Ovary (tissue), 10 donors: ENCODE measurements at regions of chr7 and their contacts with region 1.

Region 1: DNA sequence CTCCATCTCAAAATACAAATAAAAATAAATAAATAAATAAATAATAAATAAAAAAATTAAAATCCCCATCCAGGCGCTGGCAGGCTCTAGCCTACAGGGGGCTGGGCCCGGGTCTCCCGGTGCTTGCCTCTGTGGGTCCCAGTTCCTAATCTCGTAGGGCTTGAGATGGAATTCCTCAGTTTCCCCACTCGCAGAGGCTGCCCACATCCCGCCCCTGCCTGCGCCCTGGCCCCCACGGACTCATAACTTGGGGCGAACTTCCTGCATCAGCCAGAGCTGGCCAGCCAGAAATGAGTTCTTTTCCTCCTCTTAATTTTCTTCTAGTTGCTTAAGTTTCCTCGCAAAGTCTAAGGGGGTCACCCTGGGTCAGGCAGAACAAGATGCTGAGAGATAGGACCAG is 22.0 kb upstream of the SRRM3 start:
- DNase-seq: no peak
- H3K4me3 ChIP-seq: no peak overlapping the region
- H3K27ac ChIP-seq: no peak overlapping the region
- H3K4me1 ChIP-seq: no peaks in the 10 kb centered on the region
- H3K27me3 ChIP-seq: no peaks in the 10 kb centered on the region
- CTCF ChIP-seq: no peak
- EP300 ChIP-seq: no peak
- POLR2A ChIP-seq: no peak

Region 2: DNA sequence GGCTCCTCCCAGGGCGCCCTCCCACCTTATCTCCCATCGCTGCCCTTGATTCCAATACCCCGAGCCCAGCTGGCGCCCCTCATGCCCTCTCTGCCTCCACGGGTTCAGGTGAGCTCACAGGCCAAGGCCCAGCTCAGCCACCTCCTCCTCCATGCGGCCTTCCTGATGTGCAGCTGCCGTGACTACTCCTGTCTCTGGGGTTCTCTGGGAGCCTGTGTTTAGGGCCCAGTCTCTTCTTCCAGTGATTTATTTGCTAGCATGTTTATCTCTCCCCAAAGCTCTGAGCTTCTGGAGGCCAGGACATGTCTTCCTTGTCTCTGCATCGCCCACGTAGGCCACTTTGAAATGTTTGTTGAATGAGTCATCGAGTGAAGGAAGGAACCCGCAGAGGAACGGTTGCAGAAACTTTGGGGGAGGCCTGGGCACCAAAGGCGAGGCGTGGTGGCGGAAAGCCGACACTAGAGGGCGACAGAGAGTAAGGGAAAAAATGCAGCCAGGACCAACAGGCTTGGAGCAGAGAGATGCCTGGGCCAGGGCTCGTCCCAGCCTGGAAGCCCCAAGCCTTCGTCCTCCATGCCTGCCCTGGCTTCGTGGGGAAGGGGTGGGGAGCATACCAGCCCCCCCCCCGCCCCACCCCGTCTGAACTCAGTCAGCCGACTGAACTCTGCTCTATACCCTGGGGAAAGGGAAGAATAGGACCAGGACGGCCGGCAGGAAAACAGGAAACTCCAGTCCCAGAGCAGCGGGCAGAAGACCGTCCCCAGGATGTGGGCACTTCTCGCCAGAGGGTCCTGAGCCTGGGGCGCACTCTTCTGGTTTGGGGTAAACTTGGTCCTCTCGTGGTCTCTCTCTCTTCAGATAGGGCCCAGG is 111.9 kb after region 1 on chr7:
- intact Hi-C with region 1: loop called in 2 of 4 experiments (anchors 5 to 10 kb)
- DNase-seq: peak; percentile 89 to 95 (median 93)
- H3K4me3 ChIP-seq: peak overlapping the region; percentile 25
- H3K27ac ChIP-seq: peak overlapping the region; percentile 87 to 99
- H3K4me1 ChIP-seq: peaks cover 8% of the 10 kb centered on the region
- H3K27me3 ChIP-seq: no peaks in the 10 kb centered on the region
- CTCF ChIP-seq: peak; percentile 98 to 99 (median 98)
- EP300 ChIP-seq: no peak
- POLR2A ChIP-seq: peak; percentile 23